HepG2 (cell line): ENCODE measurements at regions of chr22 and their contacts with region 1.

Region 1: DNA sequence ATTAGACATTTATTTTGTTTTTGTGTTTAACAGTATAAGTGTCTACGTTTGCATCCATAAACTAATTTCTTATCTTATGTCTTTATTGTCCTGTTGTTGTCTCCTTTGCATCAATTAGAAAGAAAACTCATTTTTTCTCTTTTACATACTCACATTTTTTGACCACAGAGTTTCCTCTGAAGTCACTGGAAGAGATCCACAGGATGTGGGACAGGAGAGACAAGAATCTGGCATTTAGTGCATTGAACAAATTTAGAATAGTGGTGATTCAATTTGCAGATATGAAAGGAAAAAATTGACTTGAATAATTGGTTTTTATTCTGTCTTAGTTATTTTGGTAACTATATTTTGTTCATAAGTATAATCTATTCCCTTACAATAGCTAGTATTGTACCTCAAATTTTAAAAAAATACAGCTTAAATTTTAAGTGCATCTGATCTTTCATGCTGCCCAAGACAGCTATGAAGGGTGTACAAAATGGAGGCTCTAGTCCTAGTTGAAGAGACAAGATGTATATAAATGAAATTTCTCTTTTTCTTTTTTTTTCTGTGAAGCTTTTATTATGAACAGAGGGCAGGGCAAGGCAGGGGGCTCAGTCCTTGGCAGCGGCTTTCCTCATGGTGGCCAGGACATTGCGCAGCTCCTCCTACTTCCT is 24.4 kb downstream of the HORMAD2 start:
- DNase-seq: no peak
- ATAC-seq: no peak
- H3K4me3 ChIP-seq: no peak overlapping the region
- H3K27ac ChIP-seq: no peak overlapping the region
- H3K4me1 ChIP-seq: no peaks in the 10 kb centered on the region
- H3K27me3 ChIP-seq: no peaks in the 10 kb centered on the region; a peak in 1 of 5 replicates
- CTCF ChIP-seq: no peak
- EP300 ChIP-seq: no peak
- POLR2A ChIP-seq: no peak
- RAD21 ChIP-seq: no peak

Region 2: GRCh38 chr22:30038219-30038618 is 66.4 kb before region 1 on chr22:
- CTCF ChIA-PET with region 1: no interaction called
- POLR2A ChIA-PET with region 1: no interaction called
- in situ Hi-C with region 1: no loop called
- intact Hi-C with region 1: no loop called
- DNase-seq: no peak
- ATAC-seq: no peak
- H3K4me3 ChIP-seq: no peak overlapping the region
- H3K27ac ChIP-seq: no peak overlapping the region
- H3K4me1 ChIP-seq: no peaks in the 10 kb centered on the region
- H3K27me3 ChIP-seq: peaks cover 3 to 20% of the 10 kb centered on the region in 2 experiments; a peak in 3 of 5 replicates
- CTCF ChIP-seq: no peak
- EP300 ChIP-seq: no peak
- POLR2A ChIP-seq: no peak
- RAD21 ChIP-seq: no peak

Region 3: GRCh38 chr22:30159561-30160353 is 55.1 kb after region 1 on chr22:
- CTCF ChIA-PET with region 1: no interaction called
- POLR2A ChIA-PET with region 1: no interaction called
- in situ Hi-C with region 1: no loop called
- intact Hi-C with region 1: no loop called
- DNase-seq: peak; percentile 12
- ATAC-seq: no peak; the same call in 2 of the 3 replicates
- H3K4me3 ChIP-seq: no peak overlapping the region
- H3K27ac ChIP-seq: no peak overlapping the region
- H3K4me1 ChIP-seq: peaks cover 12% of the 10 kb centered on the region
- H3K27me3 ChIP-seq: no peaks in the 10 kb centered on the region; a peak in 1 of 5 replicates
- CTCF ChIP-seq: no peak
- EP300 ChIP-seq: no peak
- POLR2A ChIP-seq: no peak
- RAD21 ChIP-seq: no peak

Region 4: GRCh38 chr22:30253205-30253852 is 148.7 kb after region 1 on chr22:
- CTCF ChIA-PET with region 1: interaction called, 4 read pairs
- POLR2A ChIA-PET with region 1: no interaction called
- in situ Hi-C with region 1: no loop called
- intact Hi-C with region 1: loop called (anchors 1 kb)
- DNase-seq: no peak
- ATAC-seq: no peak
- H3K4me3 ChIP-seq: no peak overlapping the region
- H3K27ac ChIP-seq: no peak overlapping the region
- H3K4me1 ChIP-seq: peaks cover 67% of the 10 kb centered on the region
- H3K27me3 ChIP-seq: peaks cover 0 to 8% of the 10 kb centered on the region in 2 experiments; a peak in 2 of 5 replicates
- CTCF ChIP-seq: no peak
- EP300 ChIP-seq: no peak
- POLR2A ChIP-seq: no peak
- RAD21 ChIP-seq: no peak